ENCODE measurements at regions of chr10 and their contacts with region 1.

Region 1: GRCh38 chr10:17228091-17228940 is at the start of gene VIM:
- DNase-seq: peak; percentile 66
- H3K4me3 ChIP-seq: peak within 1 kb of the TSS; percentile 85 to 98
- H3K27ac ChIP-seq: peak within 1 kb of the TSS; percentile 94 to 100
- H3K4me1 ChIP-seq: peaks cover 0 to 8% of the 10 kb centered on the region in 2 experiments; a peak in 2 of 4 replicates
- H3K27me3 ChIP-seq: no peaks in the 10 kb centered on the region
- CTCF ChIP-seq: no peak; the same call in 1 of the 2 replicates
- EP300 ChIP-seq: peak in 1 of 2 experiments; percentile 85; a peak in 1 of 4 replicates
- RAD21 ChIP-seq: 0 out of 2 replicates have a peak, but pooled peaks have one; percentile 2
- polyA plus RNA-seq, gene VIM: 4,747 and 5,016 TPM in 2 replicates

Region 2: DNA sequence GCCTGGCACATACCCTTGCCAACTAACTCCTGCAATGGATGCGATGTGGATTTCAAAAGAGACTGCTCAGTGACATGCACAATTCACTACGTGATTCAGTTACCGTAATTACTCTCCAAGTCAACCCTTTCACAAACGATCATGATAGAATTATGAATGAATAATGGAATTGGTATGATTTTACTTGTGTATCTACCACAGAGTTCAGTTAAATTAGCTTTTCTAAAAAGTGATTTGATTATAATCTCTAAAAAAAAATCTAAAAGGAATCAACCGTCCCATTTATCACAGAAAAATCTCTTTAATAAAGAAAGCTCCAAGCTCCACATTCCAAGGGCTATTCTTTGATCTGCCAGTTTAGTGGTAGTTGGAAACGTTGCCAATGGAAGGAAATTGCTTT is 380.7 kb before region 1 on chr10:
- CTCF ChIA-PET with region 1: interaction called, 23 read pairs
- POLR2A ChIA-PET with region 1: no interaction called
- DNase-seq: no peak
- H3K4me3 ChIP-seq: no peak overlapping the region
- H3K27ac ChIP-seq: peak overlapping the region; percentile 62 to 87; a peak in 3 of 4 replicates
- H3K4me1 ChIP-seq: peaks cover 0 to 25% of the 10 kb centered on the region in 2 experiments; a peak in 3 of 4 replicates
- H3K27me3 ChIP-seq: no peaks in the 10 kb centered on the region
- CTCF ChIP-seq: no peak
- EP300 ChIP-seq: peak; percentile 50 to 91; a peak in 2 of 4 replicates
- RAD21 ChIP-seq: no peak

Region 3: DNA sequence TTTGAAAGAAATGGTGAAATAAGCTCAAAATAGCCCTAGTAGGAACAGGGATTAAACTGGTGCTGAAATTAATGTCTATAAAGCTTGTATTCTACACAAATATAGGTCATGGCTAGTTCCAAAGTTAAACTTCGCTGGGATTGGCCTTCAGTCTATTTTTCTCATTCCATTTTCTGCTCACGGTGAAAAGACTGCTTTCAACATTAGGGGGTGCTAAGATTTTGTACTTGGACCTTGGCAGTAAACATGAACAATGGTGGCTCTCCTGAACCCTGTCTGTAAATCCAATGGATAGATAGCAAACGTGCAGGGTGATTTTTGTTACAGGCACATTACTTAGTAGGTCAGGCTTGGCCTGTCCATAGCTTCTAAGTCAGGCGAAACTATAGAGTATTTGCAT is 375.1 kb before region 1 on chr10:
- CTCF ChIA-PET with region 1: interaction called, 30 read pairs
- POLR2A ChIA-PET with region 1: interaction called, 3 read pairs
- DNase-seq: peak; percentile 38
- H3K4me3 ChIP-seq: no peak overlapping the region
- H3K27ac ChIP-seq: peak overlapping the region; percentile 50 to 58
- H3K4me1 ChIP-seq: peaks cover 22 to 38% of the 10 kb centered on the region in 2 experiments
- H3K27me3 ChIP-seq: no peaks in the 10 kb centered on the region
- CTCF ChIP-seq: peak; percentile 58
- EP300 ChIP-seq: no peak
- RAD21 ChIP-seq: peak; percentile 93

Region 4: GRCh38 chr10:17200912-17201793 is 27.2 kb before region 1 on chr10 and contains the start of gene TRDMT1:
- CTCF ChIA-PET with region 1: interaction called, 9 read pairs
- POLR2A ChIA-PET with region 1: interaction called, 13 read pairs
- DNase-seq: peak; percentile 90
- H3K4me3 ChIP-seq: peak within 1 kb of the TSS; percentile 64 to 76
- H3K27ac ChIP-seq: peak within 1 kb of the TSS; percentile 98 to 99
- H3K4me1 ChIP-seq: peaks cover 9 to 16% of the 10 kb centered on the region in 2 experiments; a peak in 3 of 4 replicates
- H3K27me3 ChIP-seq: no peaks in the 10 kb centered on the region
- CTCF ChIP-seq: no peak
- EP300 ChIP-seq: peak in 1 of 2 experiments; percentile 63; a peak in 1 of 4 replicates
- RAD21 ChIP-seq: peak; percentile 41
- polyA plus RNA-seq, gene TRDMT1: 3.1 and 4.1 TPM in 2 replicates

Region 5: DNA sequence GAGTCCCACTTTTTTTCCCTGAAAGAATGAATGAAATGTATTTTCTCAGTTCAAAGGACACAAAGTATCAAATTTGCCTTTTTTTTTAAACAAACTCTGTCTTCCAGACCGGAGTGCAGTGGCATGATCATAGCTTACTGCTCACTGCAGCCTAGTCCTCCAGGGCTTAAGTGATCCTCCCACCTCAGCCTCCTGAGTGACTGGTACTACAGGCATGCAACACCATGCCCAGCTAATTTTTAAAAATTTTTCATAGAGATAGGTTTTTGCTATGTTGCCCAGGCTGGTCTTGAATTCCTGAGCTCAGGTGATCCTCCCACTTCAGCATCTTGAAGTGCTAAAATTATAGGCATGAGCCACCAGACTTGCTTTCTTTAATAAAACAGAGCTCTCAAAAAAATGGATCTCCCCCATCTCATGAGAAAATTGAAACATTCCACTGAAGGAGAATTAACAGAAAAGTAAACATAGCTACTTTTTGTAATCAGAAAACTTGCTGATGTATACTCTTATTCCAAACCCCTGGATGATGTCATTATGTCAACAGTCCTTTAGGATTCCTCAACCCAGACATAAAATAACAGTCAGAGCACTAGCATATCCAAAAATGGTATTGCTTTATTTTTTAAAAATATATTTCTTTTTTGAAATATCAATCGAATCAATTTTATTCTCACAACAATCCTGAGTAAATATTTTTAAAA is 14.5 kb before region 1 on chr10:
- CTCF ChIA-PET with region 1: interaction called, 14 read pairs
- POLR2A ChIA-PET with region 1: interaction called, 3 read pairs
- DNase-seq: no peak
- H3K4me3 ChIP-seq: 0 out of 4 replicates have a peak overlapping the region, but pooled peaks of 1 of the 2 experiments have one; percentile 10
- H3K27ac ChIP-seq: peak overlapping the region; percentile 88 to 100; a peak in 3 of 4 replicates
- H3K4me1 ChIP-seq: peaks cover 0 to 70% of the 10 kb centered on the region in 2 experiments; a peak in 3 of 4 replicates
- H3K27me3 ChIP-seq: no peaks in the 10 kb centered on the region
- CTCF ChIP-seq: no peak
- EP300 ChIP-seq: no peak
- RAD21 ChIP-seq: no peak

Measured in SK-N-SH (cell line).